ENCODE measurements at regions of chr5 and their contacts with region 1.

Region 1: GRCh38 chr5:170434966-170435605 is 45.9 kb upstream of the KCNMB1 start:
- DNase-seq: peak; percentile 23
- H3K4me3 ChIP-seq: no peak overlapping the region
- H3K27ac ChIP-seq: no peak overlapping the region
- H3K27me3 ChIP-seq: peaks cover 15% of the 10 kb centered on the region
- CTCF ChIP-seq: peak; percentile 98

Region 2: DNA sequence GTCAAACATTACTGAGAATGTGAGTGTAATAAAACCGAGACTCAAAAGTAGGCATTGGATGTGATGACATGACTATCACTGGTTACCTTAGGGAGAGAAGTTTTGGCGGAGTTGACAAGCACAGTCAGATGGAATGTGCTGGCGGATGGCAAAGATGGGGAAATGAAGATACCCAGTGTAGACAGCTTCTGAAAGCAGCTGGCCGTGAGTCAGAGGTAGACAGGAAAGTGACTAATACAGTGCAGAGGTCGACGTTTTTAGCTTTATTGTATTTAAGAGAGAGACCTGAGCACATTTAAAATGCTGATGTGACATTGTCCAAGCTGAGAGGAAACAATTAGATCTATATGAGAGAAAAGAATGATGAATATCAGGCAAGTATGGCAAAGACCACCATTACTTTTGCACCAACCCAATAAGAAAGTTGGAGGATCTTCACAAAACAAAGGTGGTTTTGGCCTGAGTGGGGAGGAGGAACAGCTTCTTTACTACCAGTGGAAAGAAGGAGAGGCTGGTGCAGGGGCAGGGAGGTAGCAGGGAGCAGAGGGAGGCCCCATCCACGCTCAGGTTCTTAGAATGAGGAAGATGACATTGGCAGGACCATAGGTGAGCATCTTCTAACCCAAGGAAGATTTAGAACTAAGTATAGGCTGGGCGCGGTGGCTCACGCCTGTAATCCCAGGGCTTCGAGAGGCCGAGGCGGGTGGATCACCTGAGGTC is 32.1 kb after region 1 on chr5:
- CTCF ChIA-PET with region 1: interaction called, 12 read pairs
- POLR2A ChIA-PET with region 1: no interaction called
- DNase-seq: peak; percentile 65
- H3K4me3 ChIP-seq: no peak overlapping the region
- H3K27ac ChIP-seq: no peak overlapping the region
- H3K27me3 ChIP-seq: no peaks in the 10 kb centered on the region
- CTCF ChIP-seq: no peak

Region 3: GRCh38 chr5:170623576-170624181 is 188.6 kb after region 1 on chr5:
- CTCF ChIA-PET with region 1: interaction called, 135 read pairs
- POLR2A ChIA-PET with region 1: no interaction called
- DNase-seq: peak; percentile 13
- H3K4me3 ChIP-seq: no peak overlapping the region
- H3K27ac ChIP-seq: no peak overlapping the region
- H3K27me3 ChIP-seq: no peaks in the 10 kb centered on the region
- CTCF ChIP-seq: peak; percentile 72

Measured in AG04450 (cell line).